ENCODE measurements at regions of chr1 and their contacts with region 1.

Region 1: GRCh38 chr1:42173155-42173933 is 8.8 kb upstream of the GUCA2A start:
- DNase-seq: peak; percentile 70
- ATAC-seq: peak; percentile 74
- H3K4me3 Mint-ChIP-seq: no peak overlapping the region
- H3K27ac Mint-ChIP-seq: no peak overlapping the region
- H3K4me1 Mint-ChIP-seq: no peaks in the 10 kb centered on the region
- H3K27me3 Mint-ChIP-seq: no peaks in the 10 kb centered on the region

Region 2: GRCh38 chr1:41573785-41574713 is 599.3 kb before region 1 on chr1:
- CTCF ChIA-PET with region 1: interaction called, 16 read pairs
- DNase-seq: peak; percentile 90
- ATAC-seq: peak; percentile 99
- H3K4me3 Mint-ChIP-seq: no peak overlapping the region
- H3K27ac Mint-ChIP-seq: peak overlapping the region; percentile 13
- H3K4me1 Mint-ChIP-seq: peaks cover 18% of the 10 kb centered on the region
- H3K27me3 Mint-ChIP-seq: no peaks in the 10 kb centered on the region

Region 3: DNA sequence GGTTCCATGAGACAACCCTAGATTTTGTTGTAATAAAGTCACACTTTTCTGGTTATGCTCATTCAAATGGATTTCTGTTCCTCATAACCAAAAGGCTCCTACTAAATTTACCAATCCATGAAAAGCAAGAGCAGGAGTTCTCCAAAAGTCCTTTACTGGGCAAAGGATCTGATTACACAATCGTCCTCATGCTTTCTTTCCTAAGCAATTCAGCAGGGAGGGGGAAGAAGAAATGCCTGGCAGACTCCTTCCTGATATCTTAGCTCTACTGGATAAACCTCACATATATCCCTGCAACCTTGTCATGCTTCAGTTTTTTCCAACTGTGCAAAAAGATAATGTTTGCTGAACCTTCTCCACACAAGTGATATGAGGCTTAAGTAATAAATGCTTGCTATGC is 87.7 kb before region 1 on chr1:
- CTCF ChIA-PET with region 1: no interaction called
- DNase-seq: no peak
- ATAC-seq: no peak
- H3K4me3 Mint-ChIP-seq: no peak overlapping the region
- H3K27ac Mint-ChIP-seq: no peak overlapping the region
- H3K4me1 Mint-ChIP-seq: no peaks in the 10 kb centered on the region
- H3K27me3 Mint-ChIP-seq: peaks cover 36% of the 10 kb centered on the region

Region 4: DNA sequence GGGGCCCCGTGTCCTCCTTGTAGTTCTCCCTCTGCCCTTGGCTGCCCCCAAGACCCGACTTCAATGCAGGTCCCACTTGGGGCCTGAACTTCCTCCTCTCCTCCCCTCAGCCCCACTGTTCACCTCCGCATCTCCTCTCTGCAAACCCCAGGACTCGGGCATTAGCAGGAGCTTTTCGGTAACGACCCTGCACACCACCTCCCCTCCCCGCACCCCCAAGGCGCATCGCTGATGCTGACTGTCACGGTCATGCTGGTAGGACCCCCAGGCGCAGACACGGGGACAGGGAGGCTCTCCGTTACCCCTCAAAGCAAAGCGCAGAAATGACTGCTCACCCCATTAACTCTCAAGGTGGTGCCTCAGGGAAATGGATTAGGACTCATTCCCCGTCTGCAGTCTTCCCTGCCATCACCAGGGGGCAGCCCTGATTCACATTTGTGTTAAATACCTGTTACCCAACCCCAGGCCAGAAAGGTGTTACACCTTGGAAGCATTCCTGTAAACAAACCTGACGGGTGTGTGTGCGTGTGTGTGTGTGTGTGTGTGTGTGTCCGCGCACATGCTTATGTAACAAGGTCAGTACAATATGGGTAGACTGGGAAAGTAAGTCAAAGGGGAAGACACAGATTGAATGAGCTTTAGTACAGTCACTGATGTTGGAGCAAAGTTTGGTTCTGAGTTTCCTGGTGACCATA is 26.6 kb before region 1 on chr1:
- CTCF ChIA-PET with region 1: interaction called, 14 read pairs
- DNase-seq: peak; percentile 78
- ATAC-seq: peak; percentile 82
- H3K4me3 Mint-ChIP-seq: no peak overlapping the region
- H3K27ac Mint-ChIP-seq: no peak overlapping the region
- H3K4me1 Mint-ChIP-seq: peaks cover 7% of the 10 kb centered on the region
- H3K27me3 Mint-ChIP-seq: peaks cover 15% of the 10 kb centered on the region

Measured in activated CD8-positive, alpha-beta memory T cell treated with anti-CD3 and anti-CD28 coated beads, Interleukin-2, amount 10 ng/mL, durations not matched to agents 7 days and 5 days (primary cell).